ENCODE measurements at regions of chr15 and their contacts with region 1.

Region 1: DNA sequence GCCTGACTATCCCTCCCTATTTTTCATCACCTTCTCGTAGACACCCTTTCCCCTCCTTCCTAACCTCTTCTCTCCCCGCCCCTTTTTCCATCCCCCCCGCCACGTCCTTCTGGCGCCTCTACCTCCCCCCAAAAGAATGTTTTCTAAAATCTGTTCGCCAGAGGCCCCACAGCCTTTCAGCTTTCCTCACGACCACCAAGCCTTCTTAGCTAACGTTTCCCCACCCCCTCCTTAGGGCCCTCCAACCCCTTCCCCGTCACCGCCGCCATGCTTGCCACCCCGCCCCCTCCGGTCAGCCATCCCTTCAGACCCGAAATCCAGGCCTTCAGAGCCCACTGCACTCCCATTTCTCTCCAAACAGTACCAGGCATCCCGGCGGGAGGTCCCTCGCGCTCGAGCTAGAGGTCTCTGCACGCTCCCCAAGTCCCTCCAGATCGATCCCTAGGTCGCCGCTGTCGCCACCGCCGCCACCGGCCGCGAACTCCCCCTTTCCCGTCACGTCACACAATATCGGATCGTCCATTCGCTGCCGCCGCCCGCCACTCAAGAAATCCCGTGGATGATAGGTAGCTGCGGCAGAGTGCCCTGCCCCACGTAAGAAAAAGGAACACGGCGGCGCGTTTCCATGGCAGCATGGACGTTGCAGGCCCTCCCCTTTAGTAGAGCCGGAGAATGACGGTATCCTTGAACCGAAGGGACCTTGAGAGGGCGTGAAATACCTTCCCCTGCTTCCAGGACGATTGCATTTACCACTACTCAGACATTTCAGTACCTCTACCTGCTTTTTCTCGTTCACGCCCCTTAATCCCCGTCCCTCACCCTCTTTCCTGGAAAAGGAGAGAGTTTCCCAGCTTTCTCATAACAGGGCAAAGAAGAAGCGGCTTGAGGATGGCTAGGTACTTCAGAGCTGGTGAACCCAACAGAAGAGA is at the start of gene TP53BP1:
- DNase-seq: peak; percentile 93
- H3K4me3 Mint-ChIP-seq: peak within 1 kb of the TSS; percentile 93
- H3K27ac Mint-ChIP-seq: peak within 1 kb of the TSS; percentile 97
- H3K4me1 Mint-ChIP-seq: peaks cover 26% of the 10 kb centered on the region
- H3K27me3 Mint-ChIP-seq: no peaks in the 10 kb centered on the region
- total RNA-seq, gene TP53BP1: 44.1 and 46.1 TPM in 2 replicates

Region 2: DNA sequence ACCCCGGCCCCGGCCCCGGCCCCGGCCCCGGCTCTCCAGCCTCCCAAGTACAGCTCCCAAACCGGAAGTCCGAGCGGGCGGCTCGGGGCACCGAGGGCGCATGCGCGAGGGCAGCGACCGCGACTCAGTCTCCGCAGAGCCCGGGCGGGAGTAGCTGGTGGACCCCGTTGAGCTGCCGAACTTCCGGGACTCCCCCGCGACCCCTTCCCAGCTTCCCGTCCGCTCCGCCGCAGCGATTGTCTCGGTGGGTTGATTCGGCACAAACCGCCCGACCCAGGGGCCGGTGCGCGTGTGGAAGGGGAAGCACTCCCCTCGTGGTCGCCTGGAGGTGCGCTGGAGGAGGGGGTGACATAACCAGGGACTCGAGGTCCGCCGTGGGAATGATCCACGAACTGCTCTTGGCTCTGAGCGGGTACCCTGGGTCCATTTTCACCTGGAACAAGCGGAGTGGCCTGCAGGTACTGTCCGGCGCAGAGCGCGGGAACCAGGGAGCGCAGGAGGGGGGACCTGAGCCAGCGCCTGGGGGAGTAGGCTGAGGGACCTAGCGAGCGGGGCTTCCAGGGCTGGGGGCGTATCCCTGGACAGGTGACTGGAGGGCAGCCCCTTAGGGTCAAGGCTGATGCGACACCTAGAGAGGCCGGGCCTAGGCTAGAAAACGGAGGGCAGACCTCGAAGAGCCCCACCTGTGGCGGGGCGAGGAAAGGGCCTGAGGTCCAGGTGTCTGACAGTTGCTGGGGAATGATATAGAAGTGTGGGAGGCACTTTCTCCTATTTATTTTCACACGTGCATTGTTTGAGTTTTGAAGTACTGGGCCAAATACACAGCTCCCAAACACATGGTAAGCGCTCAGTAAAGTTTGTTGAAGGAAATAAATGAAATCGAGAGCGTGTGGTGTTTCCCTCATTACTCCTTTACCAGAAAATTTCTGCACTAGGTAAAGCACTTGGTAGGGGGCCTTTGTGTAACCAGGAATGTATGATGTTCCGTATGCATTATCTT is 121.7 kb before region 1 on chr15 and contains the starts of genes TUBGCP4 and ZSCAN29:
- intact Hi-C with region 1: loop called (anchors 5 kb)
- DNase-seq: peak; percentile 77
- H3K4me3 Mint-ChIP-seq: peak within 1 kb of the TSS; percentile 92
- H3K27ac Mint-ChIP-seq: peak within 1 kb of the TSS; percentile 83
- H3K4me1 Mint-ChIP-seq: peaks cover 54% of the 10 kb centered on the region
- H3K27me3 Mint-ChIP-seq: no peaks in the 10 kb centered on the region
- total RNA-seq, gene TUBGCP4: 46.5 and 47.2 TPM in 2 replicates
- total RNA-seq, gene ZSCAN29: 32.9 and 34.9 TPM in 2 replicates

Region 3: GRCh38 chr15:43440721-43441281 is 52.1 kb before region 1 on chr15:
- intact Hi-C with region 1: loop called (anchors 1 kb)
- DNase-seq: peak; percentile 21
- H3K4me3 Mint-ChIP-seq: peak overlapping the region; percentile 19
- H3K27ac Mint-ChIP-seq: peak overlapping the region; percentile 92
- H3K4me1 Mint-ChIP-seq: peaks cover 10% of the 10 kb centered on the region
- H3K27me3 Mint-ChIP-seq: no peaks in the 10 kb centered on the region

Measured in activated T-helper 1 cell treated with anti-CD3 and anti-CD28 coated beads, Interleukin-12 subunit alpha, Interleukin-12 subunit beta, Interleukin-2, Interleukin-4 antibody, amounts not matched to agents 30 ng/mL and 10 ng/mL and 1 ng/mL, durations not matched to agents 14 hours and 24 hours and 36 hours (primary cell).